MCF 10A (cell line): ENCODE measurements at regions of chr2 and their contacts with region 1.

Region 1: GRCh38 chr2:227464361-227464760 is 7.6 kb upstream of the AGFG1 start:
- DNase-seq: no peak
- H3K4me3 Mint-ChIP-seq: no peak overlapping the region
- H3K27ac Mint-ChIP-seq: no peak overlapping the region
- H3K4me1 Mint-ChIP-seq: peaks cover 20% of the 10 kb centered on the region
- H3K27me3 Mint-ChIP-seq: no peaks in the 10 kb centered on the region
- CTCF ChIP-seq: no peak

Region 2: GRCh38 chr2:227378371-227378782 is 86.0 kb before region 1 on chr2:
- CTCF ChIA-PET with region 1: no interaction called
- POLR2A ChIA-PET with region 1: no interaction called
- intact Hi-C with region 1: no loop called
- DNase-seq: peak; percentile 88
- H3K4me3 Mint-ChIP-seq: no peak overlapping the region
- H3K27ac Mint-ChIP-seq: peak overlapping the region; percentile 86
- H3K4me1 Mint-ChIP-seq: peaks cover 23% of the 10 kb centered on the region
- H3K27me3 Mint-ChIP-seq: no peaks in the 10 kb centered on the region
- CTCF ChIP-seq: no peak

Region 3: GRCh38 chr2:227415538-227416424 is 48.6 kb before region 1 on chr2:
- CTCF ChIA-PET with region 1: interaction called, 7 read pairs
- POLR2A ChIA-PET with region 1: interaction called, 13 read pairs
- intact Hi-C with region 1: no loop called
- DNase-seq: peak; percentile 91
- H3K4me3 Mint-ChIP-seq: peak overlapping the region; percentile 21
- H3K27ac Mint-ChIP-seq: peak overlapping the region; percentile 79
- H3K4me1 Mint-ChIP-seq: peaks cover 42% of the 10 kb centered on the region
- H3K27me3 Mint-ChIP-seq: no peaks in the 10 kb centered on the region
- CTCF ChIP-seq: no peak